ENCODE measurements at regions of chr18 and their contacts with region 1.

Region 1: GRCh38 chr18:21330122-21330701 is 88.2 kb downstream of the GREB1L start:
- DNase-seq: no peak
- ATAC-seq: no peak
- H3K4me3 ChIP-seq: no peak overlapping the region
- H3K4me3 Mint-ChIP-seq: no peak overlapping the region
- H3K27ac ChIP-seq: no peak overlapping the region
- H3K27ac Mint-ChIP-seq: no peak overlapping the region
- H3K4me1 ChIP-seq: no peaks in the 10 kb centered on the region
- H3K4me1 Mint-ChIP-seq: no peaks in the 10 kb centered on the region
- H3K27me3 ChIP-seq: no peaks in the 10 kb centered on the region
- H3K27me3 Mint-ChIP-seq: peaks cover under 1% of the 10 kb centered on the region
- CTCF ChIP-seq: no peak

Region 2: DNA sequence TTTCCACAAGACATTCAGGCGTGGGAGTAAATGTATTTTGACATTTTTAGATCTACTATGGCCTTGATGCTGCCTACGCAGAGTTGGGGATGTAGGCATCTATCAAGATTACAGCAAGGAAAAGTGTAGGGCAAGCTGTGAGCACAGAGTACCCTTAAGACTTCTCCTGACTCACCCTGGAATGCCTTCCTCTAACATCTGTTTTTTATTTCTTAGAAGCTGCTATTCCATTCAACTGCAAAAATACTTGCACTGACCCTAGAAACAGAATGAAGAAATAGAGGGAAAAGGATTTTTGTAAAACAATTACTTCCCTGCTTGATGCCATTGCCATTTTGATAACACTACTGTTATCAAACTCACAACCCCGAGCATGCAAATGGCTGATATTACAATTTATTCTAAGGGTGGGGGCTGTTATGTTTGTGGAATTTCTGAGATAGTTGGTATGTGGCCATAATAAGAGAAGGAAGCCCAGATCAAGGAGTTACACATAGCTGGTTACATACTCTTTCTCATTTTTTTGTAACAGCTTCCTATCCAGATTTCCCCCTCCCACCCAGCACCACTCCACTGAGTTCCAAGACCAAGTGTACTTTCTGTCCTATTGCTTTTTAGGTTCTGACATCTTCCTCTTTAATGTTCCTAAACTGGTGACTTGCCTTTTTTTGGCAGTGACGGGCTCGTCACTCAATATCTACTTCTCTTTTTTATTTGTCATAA is 212.6 kb before region 1 on chr18:
- CTCF ChIA-PET with region 1: no interaction called
- POLR2A ChIA-PET with region 1: no interaction called
- intact Hi-C with region 1: no loop called
- DNase-seq: peak in 3 of 14 experiments; percentile 14 to 51 (median 39)
- ATAC-seq: no peak
- H3K4me3 ChIP-seq: no peak overlapping the region
- H3K4me3 Mint-ChIP-seq: no peak overlapping the region
- H3K27ac ChIP-seq: no peak overlapping the region
- H3K27ac Mint-ChIP-seq: no peak overlapping the region
- H3K4me1 ChIP-seq: peaks cover 2% of the 10 kb centered on the region
- H3K4me1 Mint-ChIP-seq: peaks cover 1% of the 10 kb centered on the region
- H3K27me3 ChIP-seq: no peaks in the 10 kb centered on the region
- H3K27me3 Mint-ChIP-seq: no peaks in the 10 kb centered on the region
- CTCF ChIP-seq: no peak

Region 3: DNA sequence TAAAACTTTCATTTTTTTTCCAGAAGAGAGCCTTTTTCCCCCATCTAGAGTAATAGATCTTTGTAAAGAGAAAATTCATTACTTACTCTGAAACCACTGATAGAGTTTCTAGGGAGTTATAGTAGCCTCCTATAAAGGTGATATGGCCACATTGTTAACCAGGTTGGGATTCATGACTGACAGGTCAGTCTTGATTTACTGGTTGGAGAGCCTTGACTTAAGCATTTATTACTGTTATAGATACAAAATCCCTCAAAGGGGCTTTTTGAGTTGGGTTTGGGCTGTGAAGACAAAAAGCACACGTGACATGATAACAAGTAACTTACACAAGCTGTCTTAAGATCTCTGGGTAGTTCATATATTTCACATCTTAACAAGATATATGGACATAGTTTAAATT is 52.8 kb after region 1 on chr18:
- CTCF ChIA-PET with region 1: no interaction called
- POLR2A ChIA-PET with region 1: no interaction called
- intact Hi-C with region 1: loop called in 1 of 2 experiments (anchors 5 kb)
- DNase-seq: no peak
- ATAC-seq: no peak
- H3K4me3 ChIP-seq: no peak overlapping the region
- H3K4me3 Mint-ChIP-seq: no peak overlapping the region
- H3K27ac ChIP-seq: no peak overlapping the region
- H3K27ac Mint-ChIP-seq: no peak overlapping the region
- H3K4me1 ChIP-seq: no peaks in the 10 kb centered on the region
- H3K4me1 Mint-ChIP-seq: no peaks in the 10 kb centered on the region
- H3K27me3 ChIP-seq: no peaks in the 10 kb centered on the region
- H3K27me3 Mint-ChIP-seq: peaks cover 8% of the 10 kb centered on the region
- CTCF ChIP-seq: no peak